Heart right ventricle (tissue), 16 donors: ENCODE measurements at regions of chr6 and their contacts with region 1.

Region 1: GRCh38 chr6:42407379-42407778 is 44.3 kb downstream of the TRERF1 start:
- DNase-seq: no peak
- ATAC-seq: peak in 5 of 8 donors; percentile 40 to 65 (median 60)
- H3K4me3 ChIP-seq: no peak overlapping the region
- H3K27ac ChIP-seq: peak overlapping the region in 7 of 10 donors; percentile 26 to 74 (median 51)
- H3K4me1 ChIP-seq: peaks cover 3 to 80% (median 41%) of the 10 kb centered on the region in 9 donors
- H3K27me3 ChIP-seq: no peaks in the 10 kb centered on the region
- CTCF ChIP-seq: no peak

Region 2: DNA sequence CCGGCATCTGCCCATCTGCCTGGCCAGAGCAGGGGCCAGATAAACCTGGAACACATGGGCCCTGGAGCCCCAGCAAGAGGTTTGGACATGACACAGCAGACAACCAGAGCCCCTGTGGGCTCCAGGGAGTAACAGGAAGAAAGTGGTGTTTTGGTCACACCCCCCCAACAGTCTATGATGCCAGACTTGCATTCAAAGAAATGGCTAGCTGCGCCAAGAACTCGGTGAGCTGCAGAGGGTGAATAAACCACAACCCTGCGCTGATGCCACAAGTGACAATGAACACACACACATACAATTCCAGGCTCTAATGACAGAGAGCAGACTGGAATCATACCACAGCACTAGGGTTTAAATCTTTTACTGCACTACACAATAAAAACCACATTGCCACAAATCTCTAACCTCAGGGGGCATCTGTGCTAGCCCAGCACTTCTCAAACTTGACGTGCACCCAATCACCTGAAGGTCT is 10.3 kb after region 1 on chr6:
- intact Hi-C with region 1: loop called in 1 of 10 experiments (anchors 1 kb)
- DNase-seq: no peak
- ATAC-seq: peak in 1 of 8 donors; percentile 33
- H3K4me3 ChIP-seq: no peak overlapping the region
- H3K27ac ChIP-seq: peak overlapping the region in 1 of 10 donors; percentile 21
- H3K4me1 ChIP-seq: peaks cover 0 to 11% (median 0%) of the 10 kb centered on the region in 9 donors
- H3K27me3 ChIP-seq: no peaks in the 10 kb centered on the region
- CTCF ChIP-seq: no peak